ENCODE measurements at regions of chr7 and their contacts with region 1.

Region 1: DNA sequence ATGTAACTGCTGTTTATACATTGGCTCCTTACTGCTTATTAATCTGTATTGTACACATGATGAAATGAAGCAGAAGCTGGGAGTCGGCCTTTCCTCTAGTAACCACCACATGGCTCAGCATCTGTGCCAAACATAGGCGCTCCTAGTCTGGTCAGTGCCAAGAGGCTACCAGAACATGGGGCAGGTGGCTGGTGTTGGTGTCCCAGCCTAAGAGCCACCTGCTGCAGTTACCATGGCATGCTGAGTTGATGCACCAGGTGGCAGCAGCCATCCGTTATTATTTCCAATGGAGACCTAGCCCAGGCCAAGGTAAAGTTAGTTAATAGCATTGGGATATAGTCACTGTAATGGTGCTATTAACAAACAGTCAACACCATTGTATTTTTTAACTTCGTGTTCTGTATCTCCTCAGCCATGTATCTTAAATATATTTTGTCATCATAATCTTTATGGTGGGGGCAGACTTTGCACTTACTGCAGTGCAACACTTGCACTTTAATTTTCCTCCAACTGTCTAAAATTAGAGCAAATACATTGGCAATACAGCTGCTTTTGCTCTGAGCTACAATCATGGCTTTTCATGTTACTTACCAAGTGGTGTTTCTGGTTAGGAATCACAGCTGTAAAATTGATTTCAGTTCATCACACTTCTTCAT is 33.1 kb downstream of the HBP1 start:
- DNase-seq: peak; percentile 62
- H3K4me3 Mint-ChIP-seq: no peak overlapping the region
- H3K27ac Mint-ChIP-seq: peak overlapping the region; percentile 56
- H3K4me1 Mint-ChIP-seq: no peaks in the 10 kb centered on the region
- H3K27me3 Mint-ChIP-seq: no peaks in the 10 kb centered on the region

Region 2: DNA sequence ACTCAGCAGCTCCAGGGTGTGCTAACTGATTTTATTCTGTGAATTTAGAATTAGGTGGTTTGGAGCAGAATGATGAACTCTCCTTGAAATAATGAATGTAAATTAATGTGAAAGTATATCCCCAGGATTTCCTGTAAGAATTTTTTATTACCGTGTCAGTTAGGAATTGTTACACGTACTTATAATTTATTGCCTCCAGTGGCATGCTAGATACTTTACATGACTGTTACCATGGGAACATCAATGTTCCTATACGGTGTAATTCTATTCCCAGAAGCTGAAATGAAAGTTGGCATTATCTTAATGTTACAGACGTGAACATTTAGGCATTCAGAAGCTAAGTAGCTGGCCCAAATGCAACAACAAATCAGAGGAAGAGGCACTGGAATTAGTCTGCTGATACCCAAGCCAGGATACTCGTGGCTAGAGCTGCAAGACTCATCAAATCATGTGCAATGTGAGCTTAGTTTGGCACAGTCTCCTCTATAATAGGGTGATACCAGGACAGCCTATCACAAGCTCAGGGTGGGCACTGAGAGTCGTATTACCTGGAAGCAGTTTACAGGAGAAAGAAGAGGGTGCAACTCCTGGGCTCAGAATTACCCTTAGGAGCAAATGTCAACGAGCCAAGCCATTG is 187.4 kb before region 1 on chr7:
- CTCF ChIA-PET with region 1: no interaction called
- intact Hi-C with region 1: no loop called
- DNase-seq: no peak
- H3K4me3 Mint-ChIP-seq: no peak overlapping the region
- H3K27ac Mint-ChIP-seq: no peak overlapping the region
- H3K4me1 Mint-ChIP-seq: no peaks in the 10 kb centered on the region
- H3K27me3 Mint-ChIP-seq: no peaks in the 10 kb centered on the region

Region 3: DNA sequence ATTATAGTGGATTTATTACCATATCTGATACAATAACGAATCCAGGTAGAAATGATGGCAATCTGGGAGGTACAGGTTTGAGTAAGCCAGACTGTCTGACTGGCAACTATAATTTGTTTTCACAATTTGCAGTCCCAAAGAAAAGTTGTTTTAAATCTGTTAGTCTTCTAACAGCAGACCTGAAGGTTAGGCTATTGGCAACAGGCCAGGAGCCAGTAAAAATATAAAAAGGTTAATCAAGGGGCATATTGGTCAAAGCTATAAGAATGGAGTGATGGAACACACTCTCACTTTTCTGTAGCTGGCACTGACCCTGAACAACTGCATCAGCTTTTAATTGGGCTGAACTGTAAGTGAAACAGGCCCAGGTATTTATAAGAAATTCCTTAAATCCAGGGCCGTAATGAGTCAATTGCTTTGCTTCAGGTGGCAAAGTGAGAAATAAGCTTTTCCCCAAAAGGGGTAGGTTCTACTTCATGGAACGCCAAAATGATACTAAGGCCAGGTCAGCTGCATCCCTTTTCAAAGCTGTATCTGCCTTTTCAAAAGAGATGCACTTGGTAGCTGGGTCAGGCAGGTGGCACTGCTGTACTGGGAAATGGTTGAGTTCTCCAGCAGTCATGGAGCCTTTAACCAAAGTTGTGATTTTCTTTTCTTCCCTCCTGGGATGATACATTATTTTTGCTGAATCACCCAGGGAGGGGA is 261.0 kb after region 1 on chr7:
- CTCF ChIA-PET with region 1: no interaction called
- intact Hi-C with region 1: loop called (anchors 10 kb)
- DNase-seq: peak; percentile 64
- H3K4me3 Mint-ChIP-seq: no peak overlapping the region
- H3K27ac Mint-ChIP-seq: no peak overlapping the region
- H3K4me1 Mint-ChIP-seq: no peaks in the 10 kb centered on the region
- H3K27me3 Mint-ChIP-seq: no peaks in the 10 kb centered on the region

Region 4: GRCh38 chr7:107501593-107501992 is 299.7 kb after region 1 on chr7:
- CTCF ChIA-PET with region 1: no interaction called
- intact Hi-C with region 1: loop called (anchors 5 kb)
- DNase-seq: peak; percentile 48
- H3K4me3 Mint-ChIP-seq: no peak overlapping the region
- H3K27ac Mint-ChIP-seq: no peak overlapping the region
- H3K4me1 Mint-ChIP-seq: peaks cover 16% of the 10 kb centered on the region
- H3K27me3 Mint-ChIP-seq: no peaks in the 10 kb centered on the region